Activated naive CD4-positive, alpha-beta T cell treated with anti-CD3 and anti-CD28 coated beads for 36 hours (primary cell): ENCODE measurements at regions of chr7 and their contacts with region 1.

Region 1: DNA sequence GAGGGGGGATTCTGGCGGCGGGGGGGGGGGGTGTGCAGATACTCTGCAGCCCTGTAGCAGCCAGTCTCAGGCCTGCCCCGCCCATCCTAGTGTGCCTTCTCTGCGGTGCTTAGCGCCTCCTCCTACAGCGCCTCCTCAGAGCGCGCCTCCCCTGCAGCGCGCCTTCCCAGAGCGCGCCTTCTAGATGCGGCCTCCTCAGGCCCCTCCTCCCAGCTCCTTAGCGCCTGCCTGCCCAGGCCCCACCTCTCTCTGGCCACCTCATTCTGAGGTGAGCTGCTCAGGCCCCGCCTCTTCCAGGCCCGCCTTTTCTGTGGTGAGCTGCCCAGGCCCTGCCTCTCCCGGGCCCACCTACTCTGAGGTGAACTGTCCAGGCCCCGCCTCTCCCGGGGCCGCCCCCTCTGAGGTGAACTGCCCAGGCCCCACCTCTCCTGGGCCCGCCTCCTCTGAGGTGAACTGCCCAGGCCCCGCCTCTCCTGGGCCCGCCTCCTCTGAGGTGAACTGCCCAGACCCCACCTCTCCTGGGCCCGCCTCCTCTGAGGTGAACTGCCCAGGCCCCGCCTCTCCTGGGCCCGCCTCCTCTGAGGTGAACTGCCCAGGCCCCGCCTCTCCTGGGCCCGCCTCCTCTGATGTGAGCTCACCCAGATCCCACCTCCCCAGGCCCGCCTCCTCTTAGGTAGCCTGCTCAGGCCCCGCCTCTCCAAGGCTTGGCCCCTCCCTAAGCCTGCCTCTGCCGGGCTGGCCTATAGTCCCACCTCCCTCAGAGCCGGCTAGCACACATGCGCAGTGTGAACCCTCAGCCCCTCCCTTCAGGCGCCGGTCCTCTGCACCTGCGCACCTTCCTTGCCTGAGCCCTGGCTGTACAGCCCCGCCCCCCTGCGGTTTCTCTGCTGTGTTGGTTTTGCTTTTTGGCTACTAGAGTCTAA is 2.1 kb upstream of the SGCE start:
- DNase-seq: peak; percentile 95
- H3K4me3 Mint-ChIP-seq: peak overlapping the region; percentile 84
- H3K27ac Mint-ChIP-seq: no peak overlapping the region
- H3K4me1 Mint-ChIP-seq: peaks cover 13% of the 10 kb centered on the region
- H3K27me3 Mint-ChIP-seq: peaks cover 24% of the 10 kb centered on the region

Region 2: GRCh38 chr7:94004024-94004951 is 653.7 kb before region 1 on chr7 and contains the start of gene BET1:
- CTCF ChIA-PET with region 1: no interaction called
- intact Hi-C with region 1: loop called (anchors 1 kb)
- DNase-seq: peak; percentile 94
- H3K4me3 Mint-ChIP-seq: peak within 1 kb of the TSS; percentile 99
- H3K27ac Mint-ChIP-seq: peak within 1 kb of the TSS; percentile 94
- H3K4me1 Mint-ChIP-seq: peaks cover 34% of the 10 kb centered on the region
- H3K27me3 Mint-ChIP-seq: peaks cover 6% of the 10 kb centered on the region
- total RNA-seq, gene BET1: 21.5 to 25.9 TPM

Region 3: DNA sequence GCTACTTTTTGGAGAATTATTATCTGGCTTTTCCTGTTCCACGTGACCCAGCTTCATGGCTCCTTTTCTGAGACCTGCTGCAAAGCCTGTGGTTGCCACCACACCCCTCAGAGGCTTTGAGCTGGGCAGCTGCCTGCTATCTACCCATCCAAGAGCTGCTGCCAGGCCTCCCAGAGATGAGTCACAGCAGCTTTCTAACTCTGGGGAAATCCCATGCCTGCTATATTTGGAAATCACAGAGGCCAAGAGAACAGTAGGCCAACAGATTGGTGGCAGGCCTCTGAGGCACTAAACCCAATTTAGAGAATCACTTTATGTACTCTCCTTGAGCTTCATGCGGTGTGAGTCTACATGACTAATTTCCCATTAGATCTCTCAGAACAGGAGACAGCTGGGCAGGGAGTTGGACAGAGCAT is 37.3 kb before region 1 on chr7:
- CTCF ChIA-PET with region 1: no interaction called
- intact Hi-C with region 1: loop called (anchors 1 kb)
- DNase-seq: peak; percentile 72
- H3K4me3 Mint-ChIP-seq: no peak overlapping the region
- H3K27ac Mint-ChIP-seq: no peak overlapping the region
- H3K4me1 Mint-ChIP-seq: peaks cover 11% of the 10 kb centered on the region
- H3K27me3 Mint-ChIP-seq: peaks cover 5% of the 10 kb centered on the region

Region 4: GRCh38 chr7:95396136-95397032 is 738.4 kb after region 1 on chr7 and contains the start of gene PON3:
- CTCF ChIA-PET with region 1: no interaction called
- intact Hi-C with region 1: loop called (anchors 5 kb)
- DNase-seq: peak; percentile 27
- H3K4me3 Mint-ChIP-seq: peak within 1 kb of the TSS; percentile 60
- H3K27ac Mint-ChIP-seq: no peak within 1 kb of the TSS
- H3K4me1 Mint-ChIP-seq: peaks cover 2% of the 10 kb centered on the region
- H3K27me3 Mint-ChIP-seq: peaks cover 41% of the 10 kb centered on the region
- total RNA-seq, gene PON3: not detected

Region 5: GRCh38 chr7:95501261-95501832 is 843.3 kb after region 1 on chr7:
- CTCF ChIA-PET with region 1: no interaction called
- intact Hi-C with region 1: loop called (anchors 5 kb)
- DNase-seq: peak; percentile 52
- H3K4me3 Mint-ChIP-seq: no peak overlapping the region
- H3K27ac Mint-ChIP-seq: peak overlapping the region; percentile 37
- H3K4me1 Mint-ChIP-seq: peaks cover 24% of the 10 kb centered on the region
- H3K27me3 Mint-ChIP-seq: peaks cover 25% of the 10 kb centered on the region